SK-N-SH (cell line): ENCODE measurements at regions of chr3 and their contacts with region 1.

Region 1: DNA sequence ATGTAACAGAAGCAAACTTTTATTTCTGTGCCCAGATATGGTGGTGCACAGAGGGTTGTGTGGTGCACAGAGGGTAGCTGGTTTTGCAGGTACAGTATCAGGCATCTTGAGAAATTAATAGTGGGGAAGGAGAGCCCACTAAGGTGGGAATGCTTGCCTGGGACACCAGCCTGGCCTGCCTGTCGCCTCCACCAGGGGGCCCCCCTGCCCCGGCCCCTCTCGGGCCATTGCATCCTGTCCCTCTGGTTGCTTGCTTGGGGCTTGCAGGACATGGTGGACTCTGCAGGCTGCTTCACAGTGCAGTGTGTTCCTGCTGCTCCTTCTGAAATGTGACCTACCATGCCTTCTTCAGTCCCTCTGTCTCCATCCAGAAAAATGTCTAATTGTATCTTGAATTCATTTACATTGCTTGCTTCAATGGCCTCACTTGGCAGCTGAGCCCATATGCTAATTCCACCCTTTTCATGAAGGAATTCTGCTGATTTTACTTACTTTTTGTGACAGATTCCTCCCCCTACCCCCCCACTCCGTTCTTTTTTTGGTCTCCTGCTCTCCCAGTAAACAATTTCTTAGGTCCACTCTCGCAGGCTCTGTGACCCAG is 73.6 kb downstream of the EEFSEC start:
- DNase-seq: peak; percentile 77
- H3K4me3 ChIP-seq: no peak overlapping the region; a peak in 1 of 4 replicates
- H3K27ac ChIP-seq: peak overlapping the region in 1 of 2 experiments; percentile 62; a peak in 2 of 4 replicates
- H3K4me1 ChIP-seq: peaks cover 6 to 28% of the 10 kb centered on the region in 2 experiments; a peak in 3 of 4 replicates
- H3K27me3 ChIP-seq: no peaks in the 10 kb centered on the region
- CTCF ChIP-seq: peak; percentile 73
- EP300 ChIP-seq: no peak
- RAD21 ChIP-seq: peak; percentile 81

Region 2: GRCh38 chr3:128210711-128211110 is 16.2 kb before region 1 on chr3:
- CTCF ChIA-PET with region 1: interaction called, 16 read pairs
- POLR2A ChIA-PET with region 1: no interaction called
- DNase-seq: no peak
- H3K4me3 ChIP-seq: no peak overlapping the region
- H3K27ac ChIP-seq: no peak overlapping the region
- H3K4me1 ChIP-seq: peaks cover 0 to 25% of the 10 kb centered on the region in 2 experiments; a peak in 2 of 4 replicates
- H3K27me3 ChIP-seq: no peaks in the 10 kb centered on the region
- CTCF ChIP-seq: no peak
- EP300 ChIP-seq: no peak
- RAD21 ChIP-seq: no peak

Region 3: GRCh38 chr3:128247666-128248409 is 20.9 kb after region 1 on chr3:
- CTCF ChIA-PET with region 1: no interaction called
- POLR2A ChIA-PET with region 1: no interaction called
- DNase-seq: no peak
- H3K4me3 ChIP-seq: no peak overlapping the region
- H3K27ac ChIP-seq: no peak overlapping the region; a peak in 1 of 4 replicates
- H3K4me1 ChIP-seq: peaks cover 4 to 17% of the 10 kb centered on the region in 2 experiments; a peak in 3 of 4 replicates
- H3K27me3 ChIP-seq: no peaks in the 10 kb centered on the region
- CTCF ChIP-seq: no peak
- EP300 ChIP-seq: no peak
- RAD21 ChIP-seq: no peak

Region 4: DNA sequence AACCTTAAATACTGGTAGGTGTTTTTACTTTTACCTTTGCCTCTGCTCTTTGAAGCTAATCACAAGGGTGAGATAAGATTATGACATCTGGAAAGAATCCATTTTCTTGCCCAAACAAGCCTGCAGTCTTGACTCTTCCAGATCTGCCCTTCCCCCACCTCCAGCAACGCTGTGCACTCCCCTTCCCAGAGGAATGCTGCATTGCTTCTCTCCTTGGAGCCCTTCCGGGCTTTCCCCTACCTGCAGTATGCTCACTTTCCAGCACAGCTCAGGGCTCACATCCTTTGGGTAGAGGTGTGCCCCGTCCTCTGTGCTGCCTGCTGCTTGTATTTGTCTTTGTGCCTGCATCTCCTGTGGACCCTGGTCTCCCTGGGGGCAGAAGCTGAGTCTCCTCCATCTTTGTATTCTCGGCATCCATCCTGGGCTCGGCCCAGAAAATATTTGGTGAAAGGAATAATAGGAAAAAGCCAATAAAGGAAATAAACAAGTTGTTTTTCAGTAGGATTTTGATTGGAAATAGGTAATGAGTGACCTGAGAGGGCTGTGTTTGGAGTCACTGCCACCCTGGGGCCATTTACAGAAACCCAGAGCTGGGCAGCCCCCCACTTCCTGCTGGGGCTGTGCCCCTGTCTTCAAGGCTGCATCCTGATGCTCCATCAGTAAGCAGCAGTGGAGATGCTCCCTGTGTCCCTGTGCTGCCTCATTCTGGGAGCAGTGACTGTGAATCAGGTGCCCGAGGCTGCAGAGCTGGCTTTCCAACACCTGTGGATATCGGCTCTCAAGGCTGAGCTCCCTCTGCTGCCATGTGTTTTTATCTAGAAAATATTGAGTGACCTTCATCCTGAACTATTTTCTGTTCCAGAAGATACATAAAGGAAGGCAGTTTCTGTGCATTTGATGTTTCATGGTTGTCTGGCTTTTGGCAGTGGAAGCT is 43.9 kb after region 1 on chr3:
- CTCF ChIA-PET with region 1: interaction called, 12 read pairs
- POLR2A ChIA-PET with region 1: no interaction called
- DNase-seq: peak; percentile 51
- H3K4me3 ChIP-seq: no peak overlapping the region
- H3K27ac ChIP-seq: peak overlapping the region in 1 of 2 experiments; percentile 86; a peak in 2 of 4 replicates
- H3K4me1 ChIP-seq: peaks cover 10 to 79% of the 10 kb centered on the region in 2 experiments; a peak in 3 of 4 replicates
- H3K27me3 ChIP-seq: no peaks in the 10 kb centered on the region
- CTCF ChIP-seq: no peak
- EP300 ChIP-seq: 0 out of 4 replicates have a peak, but pooled peaks of 1 of the 2 experiments have one; percentile 9
- RAD21 ChIP-seq: no peak

Region 5: DNA sequence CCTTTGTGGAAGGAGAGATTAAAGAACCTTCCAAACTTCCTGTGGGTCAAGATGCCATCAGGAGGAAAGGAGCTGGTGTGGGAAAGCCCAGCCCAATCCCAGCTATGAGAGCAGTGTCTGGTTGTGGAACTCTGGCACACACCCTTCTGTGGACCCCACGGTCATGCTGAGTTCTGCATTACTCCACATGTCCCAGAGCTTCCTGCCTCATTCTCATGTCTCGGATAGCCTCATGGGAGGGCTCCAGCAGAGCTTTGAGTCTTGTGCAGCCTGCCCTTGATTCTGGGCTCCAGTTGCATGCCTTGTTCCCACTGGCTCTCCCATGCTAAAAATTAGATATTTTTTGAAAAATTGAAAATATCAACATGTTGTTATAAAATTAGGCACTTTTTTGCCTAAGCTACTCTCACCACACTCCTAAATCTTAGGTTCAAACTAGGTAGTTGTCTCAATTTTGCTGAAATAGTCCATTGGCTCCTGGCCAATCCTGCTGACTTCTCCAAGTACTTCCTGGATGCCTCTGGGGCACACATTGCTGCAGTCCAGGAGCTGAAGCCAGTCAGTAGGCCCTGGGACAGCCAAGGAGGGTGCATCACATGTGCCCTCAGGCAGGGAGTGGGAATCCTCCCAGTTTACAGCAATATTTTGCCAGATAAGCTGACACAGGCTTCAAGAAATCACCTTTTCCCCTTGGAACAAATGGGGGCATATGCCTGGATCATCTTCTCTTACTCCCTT is 70.7 kb after region 1 on chr3:
- CTCF ChIA-PET with region 1: interaction called, 10 read pairs
- POLR2A ChIA-PET with region 1: no interaction called
- DNase-seq: no peak
- H3K4me3 ChIP-seq: no peak overlapping the region
- H3K27ac ChIP-seq: peak overlapping the region in 1 of 2 experiments; percentile 62; a peak in 2 of 4 replicates
- H3K4me1 ChIP-seq: peaks cover 0 to 40% of the 10 kb centered on the region in 2 experiments; a peak in 2 of 4 replicates
- H3K27me3 ChIP-seq: no peaks in the 10 kb centered on the region
- CTCF ChIP-seq: no peak
- EP300 ChIP-seq: no peak
- RAD21 ChIP-seq: no peak